ENCODE measurements at regions of chr5 and their contacts with region 1.

Region 1: GRCh38 chr5:54761213-54761701 is 224.1 kb downstream of the ESM1 start:
- DNase-seq: no peak
- ATAC-seq: no peak
- H3K4me3 Mint-ChIP-seq: no peak overlapping the region
- H3K27ac Mint-ChIP-seq: no peak overlapping the region
- H3K4me1 Mint-ChIP-seq: peaks cover 69% of the 10 kb centered on the region
- H3K27me3 Mint-ChIP-seq: no peaks in the 10 kb centered on the region
- CTCF ChIP-seq: no peak

Region 2: DNA sequence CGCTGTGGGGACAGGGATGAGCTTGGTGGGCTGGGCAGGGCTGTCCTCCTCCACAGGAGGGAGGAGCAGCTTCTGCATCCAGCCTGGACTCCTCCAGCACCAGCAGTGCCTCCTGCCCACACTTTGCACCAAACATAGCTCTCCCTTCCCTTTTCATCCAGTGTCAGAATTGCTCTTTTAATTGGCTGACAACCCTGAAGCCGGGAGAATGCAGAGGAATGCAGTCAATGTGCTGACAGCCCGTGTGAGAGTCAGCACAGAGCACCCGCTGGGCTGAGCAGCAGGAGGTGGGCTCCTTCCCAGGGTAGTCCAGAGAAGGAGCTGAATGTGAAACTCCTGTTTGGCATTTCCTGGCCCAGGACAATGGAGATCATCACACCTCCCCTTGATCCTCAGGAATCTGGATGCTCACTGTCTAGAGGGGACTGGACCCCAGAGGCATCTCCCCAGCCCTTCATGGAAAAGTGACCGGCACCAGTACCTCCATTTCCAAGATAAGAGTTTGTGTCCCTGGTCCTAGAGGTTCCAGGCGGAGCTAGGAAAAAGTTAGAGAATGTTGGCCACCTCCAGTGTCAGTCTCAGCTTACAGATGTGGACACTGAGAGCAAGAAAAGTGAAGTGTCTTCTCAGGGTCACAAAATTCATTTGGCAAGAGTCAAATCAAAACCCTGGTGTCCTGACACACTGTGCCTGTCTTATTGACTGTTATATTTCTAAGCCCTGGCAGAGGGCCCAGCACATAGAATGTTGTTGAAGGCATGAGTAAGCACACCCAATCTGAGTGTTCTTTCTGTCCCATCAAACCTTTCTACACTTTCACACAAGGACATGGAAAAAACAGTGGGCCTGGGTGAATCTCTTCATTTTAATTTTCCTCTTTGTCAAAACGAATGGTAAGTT is 41.6 kb before region 1 on chr5:
- CTCF ChIA-PET with region 1: no interaction called
- POLR2A ChIA-PET with region 1: no interaction called
- intact Hi-C with region 1: loop called (anchors 2 kb)
- DNase-seq: no peak
- ATAC-seq: no peak
- H3K4me3 Mint-ChIP-seq: no peak overlapping the region
- H3K27ac Mint-ChIP-seq: no peak overlapping the region
- H3K4me1 Mint-ChIP-seq: peaks cover 30% of the 10 kb centered on the region
- H3K27me3 Mint-ChIP-seq: no peaks in the 10 kb centered on the region
- CTCF ChIP-seq: no peak

Region 3: DNA sequence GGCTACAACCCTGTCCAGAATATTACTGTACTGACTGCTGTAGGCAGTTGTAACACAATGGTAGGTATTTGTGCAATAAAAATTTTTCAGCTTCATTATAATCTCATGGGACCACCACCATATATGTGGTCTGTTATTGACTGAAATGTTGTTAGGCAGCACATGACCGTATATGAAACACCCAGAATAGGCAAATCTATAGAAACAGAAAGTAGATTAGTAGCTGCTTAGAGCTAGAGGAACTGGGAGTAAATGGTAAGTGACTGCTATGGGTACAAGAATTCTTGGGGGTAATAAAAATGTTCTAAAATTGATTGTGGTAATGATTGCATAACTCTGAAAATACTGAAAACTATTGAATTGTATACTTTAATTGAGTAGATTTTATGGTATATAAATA is 38.4 kb after region 1 on chr5:
- CTCF ChIA-PET with region 1: no interaction called
- POLR2A ChIA-PET with region 1: interaction called, 3 read pairs
- intact Hi-C with region 1: loop called (anchors 5 kb)
- DNase-seq: no peak
- ATAC-seq: peak; percentile 94
- H3K4me3 Mint-ChIP-seq: peak overlapping the region; percentile 11
- H3K27ac Mint-ChIP-seq: peak overlapping the region; percentile 7
- H3K4me1 Mint-ChIP-seq: peaks cover 30% of the 10 kb centered on the region
- H3K27me3 Mint-ChIP-seq: no peaks in the 10 kb centered on the region
- CTCF ChIP-seq: no peak